GM23248 (cell line): ENCODE measurements at regions of chr19 and their contacts with region 1.

Region 1: GRCh38 chr19:47713046-47714021 is at the start of gene EHD2:
- DNase-seq: peak; percentile 89
- H3K4me3 ChIP-seq: peak within 1 kb of the TSS; percentile 92
- H3K27ac ChIP-seq: peak within 1 kb of the TSS; percentile 72
- H3K4me1 ChIP-seq: peaks cover 17% of the 10 kb centered on the region
- H3K27me3 ChIP-seq: no peaks in the 10 kb centered on the region
- total RNA-seq, gene EHD2: 163 and 169 TPM in 2 replicates

Region 2: GRCh38 chr19:47779524-47780214 is 66.3 kb after region 1 on chr19:
- in situ Hi-C with region 1: loop called (anchors 5 kb)
- DNase-seq: peak; percentile 44
- H3K4me3 ChIP-seq: peak overlapping the region; percentile 96
- H3K27ac ChIP-seq: no peak overlapping the region
- H3K4me1 ChIP-seq: no peaks in the 10 kb centered on the region
- H3K27me3 ChIP-seq: no peaks in the 10 kb centered on the region